ENCODE measurements at regions of chr9 and their contacts with region 1.

Region 1: GRCh38 chr9:3525836-3526164 is at the start of gene RFX3:
- DNase-seq: peak; percentile 88 to 97
- ATAC-seq: peak; percentile 59 to 86 (median 70)
- H3K4me3 ChIP-seq: peak within 1 kb of the TSS; percentile 88
- H3K4me3 Mint-ChIP-seq: peak within 1 kb of the TSS; percentile 92
- H3K27ac ChIP-seq: peak within 1 kb of the TSS; percentile 98
- H3K27ac Mint-ChIP-seq: peak within 1 kb of the TSS; percentile 89 to 94
- H3K4me1 ChIP-seq: peaks cover 16% of the 10 kb centered on the region
- H3K4me1 Mint-ChIP-seq: peaks cover 56 to 58% of the 10 kb centered on the region in 2 donors
- H3K27me3 ChIP-seq: no peaks in the 10 kb centered on the region
- H3K27me3 Mint-ChIP-seq: no peaks in the 10 kb centered on the region
- CTCF ChIP-seq: no peak
- total RNA-seq, gene RFX3: 24.0 to 30.6 (median 30.0) TPM

Region 2: DNA sequence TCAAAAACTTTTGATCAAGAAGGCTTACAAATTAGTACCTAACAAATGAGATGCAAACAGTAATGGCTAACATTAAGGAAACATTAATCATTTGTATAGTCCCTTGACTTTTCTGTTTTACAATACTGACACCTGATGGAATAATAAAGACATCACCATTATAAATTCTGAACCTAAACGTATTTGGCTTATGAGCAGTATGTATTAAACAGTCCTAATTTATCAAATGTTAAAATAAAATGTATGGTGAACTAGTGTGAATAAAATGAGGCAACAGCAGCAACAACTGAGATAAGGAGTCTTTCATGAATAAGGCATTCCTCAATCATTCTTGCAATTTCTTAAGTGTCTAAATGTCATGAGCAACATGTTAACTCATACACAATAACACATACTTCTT is 687.9 kb before region 1 on chr9:
- intact Hi-C with region 1: loop called (anchors 5 kb)
- DNase-seq: peak in 1 of 2 donors; percentile 6
- ATAC-seq: peak in 1 of 3 donors; percentile 40
- H3K4me3 ChIP-seq: no peak overlapping the region
- H3K4me3 Mint-ChIP-seq: no peak overlapping the region
- H3K27ac ChIP-seq: no peak overlapping the region
- H3K27ac Mint-ChIP-seq: peak overlapping the region; percentile 3 to 46
- H3K4me1 ChIP-seq: no peaks in the 10 kb centered on the region
- H3K4me1 Mint-ChIP-seq: peaks cover 15 to 22% of the 10 kb centered on the region in 2 donors
- H3K27me3 ChIP-seq: no peaks in the 10 kb centered on the region
- H3K27me3 Mint-ChIP-seq: no peaks in the 10 kb centered on the region
- CTCF ChIP-seq: peak; percentile 28

Region 3: DNA sequence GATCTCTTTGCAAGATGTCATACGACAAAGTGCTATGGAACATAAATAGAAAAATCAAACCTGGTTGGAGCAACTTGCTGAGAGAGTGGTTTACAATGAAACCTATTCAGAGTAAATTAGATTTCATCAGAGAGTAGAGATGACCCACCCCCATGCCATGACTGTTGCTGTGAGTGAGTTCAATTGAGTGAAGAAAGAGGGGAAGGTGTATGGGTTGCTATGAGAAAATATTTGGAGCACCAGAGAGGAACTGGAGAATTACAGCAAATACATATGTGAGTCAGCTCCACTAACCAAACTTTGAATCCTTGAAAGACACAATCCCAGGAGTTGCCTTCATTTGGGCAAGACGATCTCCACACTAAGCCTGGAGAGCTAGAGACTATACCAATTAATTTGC is 217.2 kb before region 1 on chr9:
- intact Hi-C with region 1: no loop called
- DNase-seq: no peak
- ATAC-seq: no peak
- H3K4me3 ChIP-seq: no peak overlapping the region
- H3K4me3 Mint-ChIP-seq: no peak overlapping the region
- H3K27ac ChIP-seq: no peak overlapping the region
- H3K27ac Mint-ChIP-seq: no peak overlapping the region
- H3K4me1 ChIP-seq: no peaks in the 10 kb centered on the region
- H3K4me1 Mint-ChIP-seq: peaks cover 13 to 16% of the 10 kb centered on the region in 2 donors
- H3K27me3 ChIP-seq: no peaks in the 10 kb centered on the region
- H3K27me3 Mint-ChIP-seq: no peaks in the 10 kb centered on the region
- CTCF ChIP-seq: no peak

Region 4: GRCh38 chr9:3477236-3477834 is 48.5 kb before region 1 on chr9:
- intact Hi-C with region 1: loop called (anchors 1 kb)
- DNase-seq: peak in 1 of 2 donors; percentile 53
- ATAC-seq: peak; percentile 64 to 73 (median 66)
- H3K4me3 ChIP-seq: peak overlapping the region; percentile 46
- H3K4me3 Mint-ChIP-seq: peak overlapping the region; percentile 94
- H3K27ac ChIP-seq: peak overlapping the region; percentile 78
- H3K27ac Mint-ChIP-seq: peak overlapping the region; percentile 95
- H3K4me1 ChIP-seq: no peaks in the 10 kb centered on the region
- H3K4me1 Mint-ChIP-seq: peaks cover 37 to 45% of the 10 kb centered on the region in 2 donors
- H3K27me3 ChIP-seq: no peaks in the 10 kb centered on the region
- H3K27me3 Mint-ChIP-seq: no peaks in the 10 kb centered on the region
- CTCF ChIP-seq: no peak

Region 5: DNA sequence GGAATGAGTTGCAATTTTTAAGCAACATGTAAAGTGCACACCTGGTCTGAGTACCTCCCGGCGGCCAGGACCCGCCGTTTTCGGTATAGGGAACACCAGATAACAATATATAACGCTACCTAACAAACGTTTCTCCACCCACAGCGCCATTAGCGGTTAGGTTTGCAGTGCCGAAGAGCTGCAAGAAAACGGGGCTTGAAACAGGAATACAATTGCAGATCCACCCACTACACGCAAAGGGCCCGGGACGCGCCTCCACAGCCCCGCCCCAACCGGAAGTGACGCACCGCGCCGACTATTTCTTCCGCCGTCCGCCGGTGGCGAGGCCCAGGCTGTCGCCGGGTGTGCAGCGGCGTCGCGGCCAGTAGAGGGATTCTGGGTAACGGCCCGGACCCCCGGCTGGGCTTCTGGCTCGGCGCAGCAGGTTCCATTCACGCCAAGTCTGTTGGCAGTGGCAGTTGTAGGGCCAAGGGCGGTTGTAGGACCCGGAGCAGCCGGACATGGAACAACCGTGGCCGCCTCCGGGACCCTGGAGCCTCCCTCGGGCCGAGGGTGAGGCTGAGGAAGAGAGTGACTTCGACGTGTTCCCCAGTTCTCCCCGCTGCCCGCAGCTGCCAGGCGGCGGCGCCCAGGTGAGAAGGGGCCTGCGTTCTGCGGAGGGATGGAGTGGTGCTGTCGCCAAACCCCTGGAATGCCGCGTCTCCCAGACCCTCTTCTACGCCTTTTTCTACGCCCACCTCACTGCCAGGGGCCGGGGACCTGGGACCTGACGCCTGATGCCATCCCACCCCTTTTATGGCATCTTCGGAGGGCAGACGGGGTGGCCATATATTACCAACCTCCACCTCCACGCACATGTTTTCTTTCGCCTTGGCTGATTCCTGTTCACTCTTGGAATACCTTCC is 1153.7 kb after region 1 on chr9 and contains the start of gene CDC37L1:
- intact Hi-C with region 1: loop called (anchors 10 kb)
- DNase-seq: peak; percentile 98 to 100
- ATAC-seq: peak; percentile 93 to 99 (median 97)
- H3K4me3 ChIP-seq: peak within 1 kb of the TSS; percentile 85
- H3K4me3 Mint-ChIP-seq: no peak within 1 kb of the TSS
- H3K27ac ChIP-seq: peak within 1 kb of the TSS; percentile 94
- H3K27ac Mint-ChIP-seq: no peak within 1 kb of the TSS
- H3K4me1 ChIP-seq: peaks cover 8% of the 10 kb centered on the region
- H3K4me1 Mint-ChIP-seq: peaks cover 11% of the 10 kb centered on the region in 2 donors
- H3K27me3 ChIP-seq: no peaks in the 10 kb centered on the region
- H3K27me3 Mint-ChIP-seq: peaks cover 0 to 5% of the 10 kb centered on the region in 2 donors
- CTCF ChIP-seq: peak; percentile 67
- total RNA-seq, gene CDC37L1: 11.6 to 20.1 (median 13.0) TPM

Region 6: DNA sequence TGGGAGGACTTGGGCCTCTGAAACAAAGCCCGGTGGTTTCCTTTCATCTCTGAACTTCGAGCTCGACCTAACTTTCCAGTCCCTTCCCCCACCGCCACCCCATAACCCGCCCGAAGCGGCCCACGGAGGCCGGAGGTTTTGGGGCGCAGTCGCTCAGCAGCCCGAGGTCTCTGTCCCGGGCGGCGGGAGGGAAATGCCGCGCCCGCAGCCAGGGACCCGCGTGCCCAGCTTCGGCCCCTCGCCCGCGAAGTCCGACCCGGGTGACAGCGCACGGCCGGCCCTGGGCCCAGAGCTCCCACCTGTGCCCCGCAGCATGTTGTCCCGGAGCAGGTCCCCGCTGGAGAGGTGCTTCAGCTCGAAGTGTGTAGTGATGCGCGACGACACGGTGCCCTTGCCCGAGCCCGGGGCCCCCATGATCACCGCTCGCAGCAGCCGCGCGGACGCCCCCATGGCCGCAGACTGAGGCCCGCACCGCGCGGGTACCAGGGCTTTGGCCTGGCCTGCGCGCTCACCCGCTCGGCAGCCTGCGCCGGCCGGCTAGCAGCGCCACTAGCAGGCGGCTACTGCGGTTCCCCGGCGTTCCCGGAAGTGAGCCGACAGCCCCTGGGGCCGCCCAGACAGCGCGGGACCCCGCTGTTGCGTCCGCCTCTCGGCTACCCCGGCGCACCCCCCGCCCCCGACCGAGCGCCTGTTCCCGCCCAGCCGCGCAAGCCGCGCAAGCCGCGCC is 1215.0 kb after region 1 on chr9 and contains the start of gene AK3:
- intact Hi-C with region 1: loop called (anchors 10 kb)
- DNase-seq: peak; percentile 88 to 91
- ATAC-seq: peak; percentile 91 to 98 (median 94)
- H3K4me3 ChIP-seq: peak within 1 kb of the TSS; percentile 94
- H3K4me3 Mint-ChIP-seq: peak within 1 kb of the TSS; percentile 93
- H3K27ac ChIP-seq: peak within 1 kb of the TSS; percentile 72
- H3K27ac Mint-ChIP-seq: peak within 1 kb of the TSS; percentile 90 to 91
- H3K4me1 ChIP-seq: peaks cover 20% of the 10 kb centered on the region
- H3K4me1 Mint-ChIP-seq: peaks cover 30 to 33% of the 10 kb centered on the region in 2 donors
- H3K27me3 ChIP-seq: no peaks in the 10 kb centered on the region
- H3K27me3 Mint-ChIP-seq: no peaks in the 10 kb centered on the region
- CTCF ChIP-seq: no peak
- total RNA-seq, gene AK3: 18.6 to 23.1 (median 21.0) TPM

Measured in natural killer cell (primary cell).